ENCODE measurements at regions of chr3 and their contacts with region 1.

Region 1: GRCh38 chr3:124986158-124987143 is 51.9 kb upstream of the MUC13 start:
- H3K4me3 Mint-ChIP-seq: no peak overlapping the region
- H3K27ac Mint-ChIP-seq: peak overlapping the region; percentile 87
- H3K4me1 Mint-ChIP-seq: peaks cover 46% of the 10 kb centered on the region
- H3K27me3 Mint-ChIP-seq: no peaks in the 10 kb centered on the region

Region 2: GRCh38 chr3:124747111-124747981 is 239.1 kb before region 1 on chr3:
- intact Hi-C with region 1: no loop called
- H3K4me3 Mint-ChIP-seq: no peak overlapping the region
- H3K27ac Mint-ChIP-seq: no peak overlapping the region
- H3K4me1 Mint-ChIP-seq: peaks cover 13% of the 10 kb centered on the region
- H3K27me3 Mint-ChIP-seq: peaks cover 5% of the 10 kb centered on the region

Region 3: DNA sequence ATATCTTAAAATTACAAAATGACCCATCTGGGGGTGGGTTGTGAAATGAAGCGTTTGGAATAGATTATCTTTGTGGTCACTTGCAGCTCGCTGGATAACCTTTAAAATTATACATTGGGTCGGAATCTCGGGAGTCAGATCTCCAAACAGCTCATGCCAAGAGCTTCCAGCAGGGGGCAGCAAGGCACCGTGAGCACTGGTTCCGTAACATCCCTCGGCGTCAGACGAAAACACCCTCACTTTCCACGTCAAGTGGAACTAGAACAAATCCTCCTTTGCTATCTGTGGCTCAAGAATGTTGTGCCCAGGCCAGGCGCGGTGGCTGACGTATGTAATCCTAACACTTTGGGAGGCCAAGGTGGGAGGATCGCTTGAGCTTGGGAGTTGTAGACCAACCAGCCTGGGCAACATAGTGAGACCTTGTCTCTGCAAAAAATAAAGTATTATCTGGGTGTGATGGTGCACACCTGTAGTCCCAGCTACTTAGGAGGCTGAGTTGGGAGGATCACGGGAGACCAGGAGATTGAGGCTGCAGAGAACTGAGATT is 225.1 kb before region 1 on chr3:
- intact Hi-C with region 1: loop called (anchors 10 kb)
- H3K4me3 Mint-ChIP-seq: no peak overlapping the region
- H3K27ac Mint-ChIP-seq: no peak overlapping the region
- H3K4me1 Mint-ChIP-seq: peaks cover 12% of the 10 kb centered on the region
- H3K27me3 Mint-ChIP-seq: peaks cover 15% of the 10 kb centered on the region

Region 4: DNA sequence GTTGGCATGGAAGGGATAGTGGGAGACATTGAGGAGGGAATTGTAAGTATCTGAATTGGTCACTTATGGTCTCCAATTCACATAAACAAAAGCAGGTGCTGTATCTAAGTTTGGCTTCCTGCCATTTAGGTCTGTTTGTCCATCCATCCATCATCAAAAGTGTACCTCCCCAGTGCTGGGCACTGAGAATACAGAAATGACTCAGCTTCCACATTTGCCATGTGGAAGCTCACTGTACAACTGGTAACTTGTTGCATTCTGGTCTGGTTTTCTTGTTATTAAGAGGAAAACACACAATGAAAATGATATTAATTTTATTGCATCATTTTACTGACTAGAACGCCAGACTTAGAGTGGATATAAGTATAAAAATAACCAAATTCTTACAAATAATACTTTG is 21.0 kb before region 1 on chr3:
- intact Hi-C with region 1: loop called (anchors 2 kb)
- H3K4me3 Mint-ChIP-seq: no peak overlapping the region
- H3K27ac Mint-ChIP-seq: peak overlapping the region; percentile 93
- H3K4me1 Mint-ChIP-seq: peaks cover 76% of the 10 kb centered on the region
- H3K27me3 Mint-ChIP-seq: no peaks in the 10 kb centered on the region

Measured in dendritic cell treated with granulocyte-macrophage colony-stimulating factor and Interleukin-4, amounts not matched to agents 40 ng/mL and 50 ng/mL, for 4 days (primary cell).